ENCODE measurements at regions of chr6 and their contacts with region 1.

Region 1: DNA sequence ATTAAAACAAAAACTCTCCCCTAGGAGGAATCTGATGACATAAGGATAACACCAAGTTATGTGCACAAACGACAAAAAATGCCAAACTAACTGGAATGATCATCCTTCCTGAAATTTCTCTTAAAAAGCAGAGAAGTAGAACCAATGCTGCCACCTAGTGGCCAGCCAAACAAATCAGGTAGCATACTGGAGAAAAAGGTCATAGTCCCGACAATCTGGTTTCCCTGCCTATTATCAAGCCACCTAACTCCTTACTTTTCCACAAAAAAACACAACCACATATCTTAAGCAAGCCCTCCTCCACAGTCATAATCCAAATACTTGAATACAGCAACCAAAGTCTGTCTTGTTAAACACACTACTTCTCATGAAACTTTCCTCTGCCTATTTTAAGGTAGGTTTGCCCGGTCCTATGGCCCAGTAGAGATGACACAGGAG is 5.3 kb downstream of the OARD1 start:
- DNase-seq: peak; percentile 69 to 81
- ATAC-seq: peak in 1 of 4 donors; percentile 23
- H3K4me3 ChIP-seq: no peak overlapping the region
- H3K27ac ChIP-seq: peak overlapping the region; percentile 92
- H3K4me1 ChIP-seq: peaks cover 39% of the 10 kb centered on the region
- H3K27me3 ChIP-seq: no peaks in the 10 kb centered on the region
- CTCF ChIP-seq: peak; percentile 90

Region 2: GRCh38 chr6:40986364-40986763 is 80.5 kb before region 1 on chr6:
- intact Hi-C with region 1: no loop called
- DNase-seq: no peak
- ATAC-seq: no peak
- H3K4me3 ChIP-seq: no peak overlapping the region
- H3K27ac ChIP-seq: no peak overlapping the region
- H3K4me1 ChIP-seq: no peaks in the 10 kb centered on the region
- H3K27me3 ChIP-seq: no peaks in the 10 kb centered on the region
- CTCF ChIP-seq: no peak

Region 3: DNA sequence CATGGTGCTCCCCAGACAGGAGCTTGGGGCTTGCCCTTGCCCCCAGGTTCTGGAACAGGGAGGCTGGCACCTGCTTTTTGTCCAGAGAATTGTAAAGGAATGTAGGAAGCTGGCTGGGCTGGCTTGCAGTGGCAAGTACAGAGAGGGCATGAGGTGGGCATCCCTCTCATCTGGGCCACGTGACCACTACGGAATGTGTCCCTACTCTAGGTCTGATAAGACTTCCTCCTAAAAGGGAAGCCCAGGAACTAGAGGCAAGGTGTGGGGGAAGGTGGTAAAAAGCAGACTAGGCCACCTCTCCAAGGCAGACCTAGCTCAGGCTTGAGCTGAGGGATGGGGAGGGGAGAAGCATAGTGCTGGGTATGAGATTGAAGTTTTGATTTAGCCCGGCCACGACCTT is 66.6 kb before region 1 on chr6:
- intact Hi-C with region 1: loop called (anchors 5 to 10 kb)
- DNase-seq: no peak
- ATAC-seq: no peak
- H3K4me3 ChIP-seq: no peak overlapping the region
- H3K27ac ChIP-seq: no peak overlapping the region
- H3K4me1 ChIP-seq: peaks cover 33% of the 10 kb centered on the region
- H3K27me3 ChIP-seq: no peaks in the 10 kb centered on the region
- CTCF ChIP-seq: no peak

Region 4: DNA sequence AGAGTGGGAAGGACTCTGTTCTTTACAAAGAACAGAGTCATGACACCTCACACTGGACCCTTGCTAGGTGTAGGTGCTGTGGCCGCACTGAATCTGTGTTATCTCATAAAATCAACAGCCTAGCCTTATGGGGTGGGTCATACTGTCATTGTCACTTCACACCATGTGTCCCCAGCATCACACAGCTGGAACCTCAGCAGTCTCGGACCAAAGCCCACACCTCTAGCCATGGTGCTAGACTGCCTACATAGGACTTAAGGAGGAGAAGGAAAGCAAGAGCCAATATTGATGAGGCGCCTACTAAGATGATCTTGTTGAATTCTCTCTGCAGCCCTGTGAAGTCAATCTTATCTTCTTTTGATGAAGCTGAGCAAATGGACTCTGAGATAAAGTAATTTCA is 58.9 kb before region 1 on chr6:
- intact Hi-C with region 1: loop called (anchors 5 to 10 kb)
- DNase-seq: no peak
- ATAC-seq: no peak
- H3K4me3 ChIP-seq: no peak overlapping the region
- H3K27ac ChIP-seq: no peak overlapping the region
- H3K4me1 ChIP-seq: peaks cover 2% of the 10 kb centered on the region
- H3K27me3 ChIP-seq: no peaks in the 10 kb centered on the region
- CTCF ChIP-seq: no peak

Region 5: DNA sequence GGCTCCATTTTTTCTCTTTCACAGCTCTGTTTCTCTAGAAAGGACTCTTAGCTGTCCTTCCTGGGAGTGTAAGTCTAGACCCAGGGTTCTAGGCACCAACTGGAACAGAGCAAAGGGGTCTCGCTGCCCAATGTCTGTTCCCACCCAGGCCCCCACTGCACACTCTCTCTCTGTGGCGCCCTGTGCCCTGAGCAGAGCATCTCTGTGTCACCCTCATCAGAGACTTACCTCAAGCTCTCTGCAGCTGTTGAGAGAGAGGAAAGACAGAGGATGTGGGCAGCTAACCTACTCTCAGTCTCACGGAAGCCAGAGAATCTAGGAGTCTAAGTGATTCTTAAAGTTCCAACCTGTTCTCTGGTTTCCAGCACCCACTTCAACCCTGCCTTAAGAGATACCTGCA is 278.0 kb after region 1 on chr6:
- intact Hi-C with region 1: no loop called
- DNase-seq: no peak
- ATAC-seq: no peak
- H3K4me3 ChIP-seq: no peak overlapping the region
- H3K27ac ChIP-seq: no peak overlapping the region
- H3K4me1 ChIP-seq: no peaks in the 10 kb centered on the region
- H3K27me3 ChIP-seq: peaks cover 2 to 14% (median 4%) of the 10 kb centered on the region in 3 donors
- CTCF ChIP-seq: no peak

Region 6: DNA sequence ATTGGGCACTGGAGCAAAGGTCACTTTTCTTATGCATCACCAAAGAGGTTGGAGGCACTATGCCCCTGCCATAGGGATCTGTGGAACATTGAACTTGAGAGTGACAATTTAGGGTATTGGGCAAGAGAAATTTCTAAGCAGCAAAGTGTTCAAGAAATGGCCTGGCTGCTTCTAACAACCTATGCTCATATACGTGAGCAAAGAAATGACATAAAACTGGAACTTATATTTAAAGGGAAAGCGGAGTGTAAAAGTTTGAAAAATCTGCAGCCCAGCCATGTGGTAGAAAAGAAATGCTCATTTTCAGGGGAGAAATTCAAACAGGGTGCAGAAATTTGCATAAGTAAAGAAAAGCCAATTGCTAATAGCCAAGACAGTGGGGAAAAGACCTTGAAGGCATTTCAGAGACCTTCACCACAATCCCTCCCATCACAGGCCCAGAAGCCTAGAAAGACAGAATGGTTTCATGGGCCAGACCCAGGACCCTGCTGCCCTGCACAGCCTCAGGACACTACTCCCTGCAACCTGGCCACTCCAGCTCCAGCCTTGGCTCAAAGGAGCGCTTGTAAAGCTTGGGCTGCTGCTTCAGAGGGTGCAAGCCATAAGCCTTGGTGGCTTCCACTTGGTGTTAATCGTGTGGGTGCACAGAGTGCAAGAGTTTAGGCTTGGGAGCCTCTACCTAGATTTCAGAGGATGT is 292.9 kb after region 1 on chr6:
- intact Hi-C with region 1: no loop called
- DNase-seq: no peak
- ATAC-seq: no peak
- H3K4me3 ChIP-seq: no peak overlapping the region
- H3K27ac ChIP-seq: no peak overlapping the region
- H3K4me1 ChIP-seq: no peaks in the 10 kb centered on the region
- H3K27me3 ChIP-seq: peaks cover 3 to 38% (median 4%) of the 10 kb centered on the region in 3 donors
- CTCF ChIP-seq: no peak